Vagina (tissue), 2 donors: ENCODE measurements at regions of chr10 and their contacts with region 1.

Region 1: DNA sequence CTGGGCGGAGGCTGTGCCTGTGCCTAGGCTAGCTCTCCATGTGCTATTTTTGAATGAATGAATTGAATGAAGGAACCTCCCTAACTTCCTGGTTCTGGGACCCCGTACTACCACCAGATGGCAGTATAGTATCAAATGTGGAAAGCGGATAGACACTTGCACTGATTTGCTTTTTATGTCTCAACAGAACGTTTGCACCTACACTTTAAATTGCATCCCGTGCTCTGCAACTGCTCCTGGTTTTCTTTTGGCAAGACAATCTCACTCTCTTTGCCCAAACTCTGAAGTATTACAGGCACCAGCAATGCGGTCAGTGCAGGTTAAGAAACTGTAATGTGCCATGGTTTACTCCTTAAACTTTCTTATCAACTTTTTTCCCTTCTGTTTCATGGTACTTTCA is 6.5 kb downstream of the FZD8 start:
- DNase-seq: no peak
- H3K4me3 ChIP-seq: no peak overlapping the region
- H3K27ac ChIP-seq: no peak overlapping the region
- H3K4me1 ChIP-seq: peaks cover 7% of the 10 kb centered on the region
- H3K27me3 ChIP-seq: no peaks in the 10 kb centered on the region
- CTCF ChIP-seq: peak; percentile 51 to 91 (median 81)
- POLR2A ChIP-seq: no peak

Region 2: DNA sequence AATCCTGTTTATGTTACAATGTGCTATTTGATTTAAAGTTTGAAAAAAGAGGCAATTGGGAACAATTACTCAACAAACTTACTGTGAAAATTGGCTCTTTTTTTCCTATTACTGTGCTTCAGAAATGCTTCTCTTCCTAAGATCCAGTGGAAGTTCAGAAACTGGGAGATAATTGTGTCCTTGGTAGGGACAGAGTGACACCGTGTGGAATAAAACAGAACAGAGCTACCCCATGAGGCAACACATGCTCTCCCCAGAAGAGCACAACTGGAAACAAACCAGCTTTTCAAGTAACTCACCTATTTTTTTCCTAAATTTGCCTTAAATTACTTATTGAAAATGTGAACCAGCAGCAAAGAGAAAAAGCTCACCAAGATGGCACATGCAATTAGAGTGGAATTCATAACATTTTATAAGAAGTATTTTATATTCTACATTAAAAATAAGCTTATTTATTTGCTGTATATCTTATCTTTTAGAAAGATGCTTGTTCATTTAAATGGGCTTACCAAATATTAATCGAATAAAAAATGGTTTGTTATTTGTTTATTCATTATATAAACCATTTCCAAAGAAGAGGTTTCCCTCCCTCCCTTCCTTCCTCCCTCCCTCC is 1143.8 kb after region 1 on chr10:
- intact Hi-C with region 1: loop called (anchors 5 kb)
- DNase-seq: no peak
- H3K4me3 ChIP-seq: no peak overlapping the region
- H3K27ac ChIP-seq: no peak overlapping the region
- H3K4me1 ChIP-seq: no peaks in the 10 kb centered on the region
- H3K27me3 ChIP-seq: no peaks in the 10 kb centered on the region
- CTCF ChIP-seq: peak; percentile 19 to 77 (median 50)
- POLR2A ChIP-seq: no peak